ENCODE measurements at regions of chrX and their contacts with region 1.

Region 1: GRCh38 chrX:21839334-21840192 is at the start of gene MBTPS2:
- DNase-seq: peak; percentile 82 to 93 (median 91)
- ATAC-seq: peak; percentile 95 to 96
- H3K4me3 ChIP-seq: peak within 1 kb of the TSS; percentile 63
- H3K27ac ChIP-seq: peak within 1 kb of the TSS; percentile 81
- H3K4me1 ChIP-seq: peaks cover 2% of the 10 kb centered on the region
- H3K27me3 ChIP-seq: no peaks in the 10 kb centered on the region
- total RNA-seq, gene MBTPS2: 12.2 to 12.7 (median 12.3) TPM

Region 2: GRCh38 chrX:21756785-21757529 is 82.6 kb before region 1 on chrX:
- intact Hi-C with region 1: loop called in 1 of 4 experiments (anchors 10 kb)
- DNase-seq: no peak
- ATAC-seq: peak; percentile 81 to 87
- H3K4me3 ChIP-seq: peak overlapping the region; percentile 56
- H3K27ac ChIP-seq: peak overlapping the region; percentile 78
- H3K4me1 ChIP-seq: peaks cover 2% of the 10 kb centered on the region
- H3K27me3 ChIP-seq: no peaks in the 10 kb centered on the region